CD4-positive, alpha-beta memory T cell (primary cell): ENCODE measurements at regions of chr2 and their contacts with region 1.

Region 1: GRCh38 chr2:237085248-237086221 is at the start of gene COPS8:
- DNase-seq: peak; percentile 88 to 91 (median 91)
- H3K4me3 ChIP-seq: peak within 1 kb of the TSS; percentile 48 to 79
- H3K4me3 Mint-ChIP-seq: peak within 1 kb of the TSS; percentile 99 to 100 (median 99)
- H3K27ac ChIP-seq: peak within 1 kb of the TSS; percentile 81
- H3K27ac Mint-ChIP-seq: peak within 1 kb of the TSS; percentile 97 to 100 (median 100)
- H3K4me1 ChIP-seq: peaks cover 16% of the 10 kb centered on the region
- H3K4me1 Mint-ChIP-seq: peaks cover 9 to 30% (median 16%) of the 10 kb centered on the region in 4 donors
- H3K27me3 ChIP-seq: no peaks in the 10 kb centered on the region
- H3K27me3 Mint-ChIP-seq: peaks cover 0 to 1% of the 10 kb centered on the region in 2 donors
- total RNA-seq, gene COPS8: 33.4 to 34.5 TPM

Region 2: DNA sequence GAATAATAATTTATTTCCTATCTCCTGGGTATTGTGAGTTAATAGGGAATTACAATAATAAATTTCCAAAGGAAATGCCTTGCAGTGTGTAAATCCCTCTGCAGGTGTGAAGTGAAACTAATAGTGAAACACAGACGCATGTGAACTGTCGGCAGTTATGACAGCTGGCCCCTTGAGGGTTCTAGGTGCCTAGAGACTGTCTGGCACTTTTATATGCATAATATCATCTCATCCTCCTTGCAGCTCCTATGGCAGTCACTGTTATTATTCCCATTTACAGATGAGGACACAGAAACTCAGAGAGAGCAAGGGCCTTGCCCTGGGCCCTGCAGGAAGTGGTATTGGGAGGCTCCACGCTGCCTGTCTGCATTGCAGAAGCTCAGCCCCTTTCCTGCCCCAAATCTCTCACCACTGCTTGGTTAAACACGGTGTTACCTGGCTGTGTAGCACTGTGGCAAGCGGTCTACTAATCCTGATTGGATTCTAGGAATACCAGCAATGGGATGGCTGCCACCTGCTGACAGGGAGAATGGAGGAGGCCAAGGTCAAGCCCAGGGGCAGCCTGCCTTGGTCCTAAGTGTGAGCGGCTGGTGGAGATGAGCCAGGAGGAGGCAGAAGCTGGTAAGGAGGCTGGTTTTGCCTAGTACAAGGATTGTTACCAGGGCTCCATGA is 548.7 kb before region 1 on chr2:
- CTCF ChIA-PET with region 1: no interaction called
- POLR2A ChIA-PET with region 1: interaction called, 15 read pairs
- intact Hi-C with region 1: no loop called
- DNase-seq: peak; percentile 56 to 66 (median 58)
- H3K4me3 ChIP-seq: peak overlapping the region; percentile 71 to 72
- H3K4me3 Mint-ChIP-seq: peak overlapping the region; percentile 97 to 100 (median 100)
- H3K27ac ChIP-seq: peak overlapping the region; percentile 69
- H3K27ac Mint-ChIP-seq: peak overlapping the region; percentile 90 to 100 (median 97)
- H3K4me1 ChIP-seq: peaks cover 45% of the 10 kb centered on the region
- H3K4me1 Mint-ChIP-seq: peaks cover 38 to 69% (median 51%) of the 10 kb centered on the region in 4 donors
- H3K27me3 ChIP-seq: no peaks in the 10 kb centered on the region
- H3K27me3 Mint-ChIP-seq: no peaks in the 10 kb centered on the region

Region 3: DNA sequence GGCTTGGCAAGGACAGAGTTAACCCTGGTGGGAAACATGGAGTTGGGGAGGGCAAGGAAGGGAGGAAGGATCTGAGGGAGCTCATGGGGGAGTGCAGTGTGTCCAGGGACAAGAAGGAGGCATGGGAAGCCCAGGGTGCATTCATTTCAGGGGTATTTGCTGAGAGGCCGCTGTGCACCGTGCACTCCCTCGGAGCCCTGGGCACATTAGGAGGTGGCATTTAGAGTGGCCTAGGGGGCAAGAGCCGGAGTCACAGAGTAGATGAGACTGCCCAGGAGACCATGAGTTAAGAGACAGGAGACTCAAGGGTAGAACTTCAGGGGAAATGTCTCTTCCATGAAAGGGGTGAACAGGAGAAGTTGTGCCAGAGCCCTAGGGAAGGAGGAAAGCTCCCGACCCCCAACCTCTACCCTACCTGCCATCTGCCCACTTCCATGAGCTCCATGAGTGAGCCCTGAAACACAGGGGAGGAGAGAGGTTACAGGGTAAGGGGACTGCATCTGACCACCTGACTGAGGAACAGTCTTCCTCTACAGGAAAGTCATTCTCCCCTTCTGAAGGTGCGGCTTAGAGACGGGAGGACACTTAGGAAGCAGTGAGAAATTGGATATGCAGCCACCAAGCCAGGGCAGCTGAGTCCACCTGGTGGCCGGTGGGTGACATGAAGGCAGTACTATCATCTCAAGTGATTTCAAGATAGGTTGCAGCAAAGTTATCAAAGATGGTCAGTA is 58.4 kb before region 1 on chr2:
- CTCF ChIA-PET with region 1: no interaction called
- POLR2A ChIA-PET with region 1: no interaction called
- intact Hi-C with region 1: no loop called
- DNase-seq: peak; percentile 21 to 41 (median 29)
- H3K4me3 ChIP-seq: no peak overlapping the region
- H3K4me3 Mint-ChIP-seq: no peak overlapping the region
- H3K27ac ChIP-seq: no peak overlapping the region
- H3K27ac Mint-ChIP-seq: no peak overlapping the region
- H3K4me1 ChIP-seq: no peaks in the 10 kb centered on the region
- H3K4me1 Mint-ChIP-seq: peaks cover 0 to 2% (median 0%) of the 10 kb centered on the region in 4 donors
- H3K27me3 ChIP-seq: no peaks in the 10 kb centered on the region
- H3K27me3 Mint-ChIP-seq: peaks cover 0 to 1% of the 10 kb centered on the region in 2 donors

Region 4: GRCh38 chr2:237122214-237122666 is 36.7 kb after region 1 on chr2:
- CTCF ChIA-PET with region 1: no interaction called
- POLR2A ChIA-PET with region 1: no interaction called
- intact Hi-C with region 1: no loop called
- DNase-seq: peak in 4 of 5 donors; percentile 4 to 18 (median 10)
- H3K4me3 ChIP-seq: no peak overlapping the region
- H3K4me3 Mint-ChIP-seq: no peak overlapping the region
- H3K27ac ChIP-seq: no peak overlapping the region
- H3K27ac Mint-ChIP-seq: no peak overlapping the region
- H3K4me1 ChIP-seq: no peaks in the 10 kb centered on the region
- H3K4me1 Mint-ChIP-seq: no peaks in the 10 kb centered on the region
- H3K27me3 ChIP-seq: no peaks in the 10 kb centered on the region
- H3K27me3 Mint-ChIP-seq: no peaks in the 10 kb centered on the region

Region 5: GRCh38 chr2:237181844-237182243 is 96.3 kb after region 1 on chr2:
- CTCF ChIA-PET with region 1: no interaction called
- POLR2A ChIA-PET with region 1: no interaction called
- intact Hi-C with region 1: no loop called
- DNase-seq: no peak
- H3K4me3 ChIP-seq: no peak overlapping the region
- H3K4me3 Mint-ChIP-seq: no peak overlapping the region
- H3K27ac ChIP-seq: no peak overlapping the region
- H3K27ac Mint-ChIP-seq: no peak overlapping the region
- H3K4me1 ChIP-seq: no peaks in the 10 kb centered on the region
- H3K4me1 Mint-ChIP-seq: no peaks in the 10 kb centered on the region
- H3K27me3 ChIP-seq: no peaks in the 10 kb centered on the region
- H3K27me3 Mint-ChIP-seq: peaks cover 18 to 46% of the 10 kb centered on the region in 2 donors

Region 6: DNA sequence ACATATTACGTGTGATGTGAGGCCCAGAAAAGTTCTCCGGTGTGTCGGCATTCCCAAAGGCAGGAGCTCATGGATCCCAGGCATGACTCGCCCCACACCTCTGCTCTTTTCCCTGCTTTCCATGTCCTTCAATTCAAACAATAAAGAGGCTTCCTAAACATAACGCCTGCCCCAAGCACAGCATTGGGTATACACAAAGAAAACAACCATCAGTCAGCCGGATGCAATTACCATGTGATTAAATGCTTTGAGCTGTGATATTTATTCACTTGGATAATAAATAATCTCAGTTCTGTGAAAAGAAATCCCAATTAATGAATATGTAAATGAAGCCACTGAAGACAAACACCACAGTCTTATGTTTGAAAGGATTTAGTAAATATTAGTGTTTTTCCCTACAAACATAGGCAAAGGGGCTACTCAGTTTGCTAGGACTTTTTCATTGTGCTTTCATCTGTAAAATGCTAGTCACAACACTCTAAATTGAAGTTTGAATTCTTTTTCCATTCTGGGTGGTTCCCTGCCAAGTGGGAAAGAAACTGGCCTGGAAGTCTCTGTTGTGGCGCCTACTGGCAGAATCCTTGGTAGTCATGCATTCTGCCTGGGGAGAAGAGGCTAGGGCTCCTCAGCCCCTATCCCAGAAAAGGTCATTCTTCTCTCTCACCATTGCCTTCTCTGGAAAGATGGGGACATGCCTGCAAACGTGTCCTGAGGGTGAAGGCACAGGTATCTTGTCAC is 183.8 kb after region 1 on chr2:
- CTCF ChIA-PET with region 1: no interaction called
- POLR2A ChIA-PET with region 1: no interaction called
- intact Hi-C with region 1: no loop called
- DNase-seq: no peak
- H3K4me3 ChIP-seq: no peak overlapping the region
- H3K4me3 Mint-ChIP-seq: no peak overlapping the region
- H3K27ac ChIP-seq: no peak overlapping the region
- H3K27ac Mint-ChIP-seq: no peak overlapping the region
- H3K4me1 ChIP-seq: no peaks in the 10 kb centered on the region
- H3K4me1 Mint-ChIP-seq: no peaks in the 10 kb centered on the region
- H3K27me3 ChIP-seq: no peaks in the 10 kb centered on the region
- H3K27me3 Mint-ChIP-seq: peaks cover 11 to 17% of the 10 kb centered on the region in 2 donors